CD8-positive, alpha-beta memory T cell (primary cell): ENCODE measurements at regions of chrX and their contacts with region 1.

Region 1: DNA sequence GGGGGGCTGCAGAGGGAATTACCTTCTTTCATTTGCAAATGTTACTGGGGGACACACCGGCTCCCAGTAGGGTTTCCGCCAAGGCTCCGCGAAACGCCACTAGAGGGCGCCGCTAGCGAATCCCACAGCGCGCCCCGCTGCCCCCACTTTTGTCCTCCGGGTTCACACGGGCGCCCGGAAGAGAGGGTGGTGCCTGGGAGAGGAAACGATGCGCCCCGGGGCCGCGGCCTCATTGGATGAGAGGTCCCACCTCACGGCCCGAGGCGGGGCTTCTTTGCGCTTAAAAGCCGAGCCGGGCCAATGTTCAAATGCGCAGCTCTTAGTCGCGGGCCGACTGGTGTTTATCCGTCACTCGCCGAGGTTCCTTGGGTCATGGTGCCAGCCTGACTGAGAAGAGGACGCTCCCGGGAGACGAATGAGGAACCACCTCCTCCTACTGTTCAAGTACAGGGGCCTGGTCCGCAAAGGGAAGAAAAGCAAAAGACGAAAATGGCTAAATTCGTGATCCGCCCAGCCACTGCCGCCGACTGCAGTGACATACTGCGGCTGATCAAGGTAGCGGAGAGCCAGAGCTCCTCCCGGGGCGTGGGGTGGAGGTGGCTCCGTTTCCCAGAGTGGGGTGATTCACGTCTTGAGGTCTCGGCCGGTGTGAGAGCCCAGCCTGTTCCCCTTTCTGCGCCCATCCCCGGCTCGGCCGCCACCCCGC is at the start of gene SAT1:
- DNase-seq: peak; percentile 87 to 96 (median 90)
- H3K4me3 ChIP-seq: peak within 1 kb of the TSS; percentile 78
- H3K4me3 Mint-ChIP-seq: peak within 1 kb of the TSS; percentile 95 to 100 (median 97)
- H3K27ac ChIP-seq: peak within 1 kb of the TSS; percentile 89
- H3K27ac Mint-ChIP-seq: peak within 1 kb of the TSS; percentile 96 to 98 (median 98)
- H3K4me1 ChIP-seq: peaks cover 23% of the 10 kb centered on the region
- H3K4me1 Mint-ChIP-seq: peaks cover 34 to 44% (median 42%) of the 10 kb centered on the region in 3 donors
- H3K27me3 ChIP-seq: no peaks in the 10 kb centered on the region
- H3K27me3 Mint-ChIP-seq: peaks cover 0 to 5% of the 10 kb centered on the region in 2 donors
- total RNA-seq, gene SAT1: 40.0 to 41.3 TPM

Region 2: DNA sequence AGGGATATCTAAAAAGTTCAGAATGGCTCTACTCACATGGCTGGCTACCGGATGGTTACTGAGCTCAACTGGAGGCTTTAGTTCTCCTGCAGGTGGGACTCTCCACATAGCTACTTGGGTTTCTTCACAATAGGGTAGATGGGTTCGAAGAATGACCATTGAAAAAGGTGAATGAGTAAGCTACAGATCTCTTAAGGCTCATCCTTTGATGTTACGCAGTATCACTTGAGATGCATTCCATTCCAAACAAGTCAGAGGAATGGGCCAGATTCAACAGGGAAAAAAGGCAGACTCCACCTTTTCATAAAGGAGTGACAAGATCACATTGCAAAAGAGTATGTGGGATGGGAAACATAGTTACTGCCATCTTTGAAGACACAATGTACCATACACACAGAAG is 730.7 kb before region 1 on chrX:
- CTCF ChIA-PET with region 1: no interaction called
- POLR2A ChIA-PET with region 1: no interaction called
- DNase-seq: no peak
- H3K4me3 ChIP-seq: no peak overlapping the region
- H3K4me3 Mint-ChIP-seq: no peak overlapping the region
- H3K27ac ChIP-seq: no peak overlapping the region
- H3K27ac Mint-ChIP-seq: no peak overlapping the region
- H3K4me1 ChIP-seq: no peaks in the 10 kb centered on the region
- H3K4me1 Mint-ChIP-seq: no peaks in the 10 kb centered on the region
- H3K27me3 ChIP-seq: no peaks in the 10 kb centered on the region
- H3K27me3 Mint-ChIP-seq: peaks cover 0 to 2% of the 10 kb centered on the region in 2 donors

Region 3: GRCh38 chrX:23742697-23743622 is 40.1 kb before region 1 on chrX and contains the start of gene ACOT9:
- CTCF ChIA-PET with region 1: interaction called, 19 read pairs
- POLR2A ChIA-PET with region 1: interaction called, 11 read pairs
- DNase-seq: peak; percentile 45 to 79 (median 75)
- H3K4me3 ChIP-seq: peak within 1 kb of the TSS; percentile 62
- H3K4me3 Mint-ChIP-seq: peak within 1 kb of the TSS; percentile 85 to 95 (median 90)
- H3K27ac ChIP-seq: peak within 1 kb of the TSS; percentile 71
- H3K27ac Mint-ChIP-seq: peak within 1 kb of the TSS; percentile 86 to 95 (median 93)
- H3K4me1 ChIP-seq: peaks cover 17% of the 10 kb centered on the region
- H3K4me1 Mint-ChIP-seq: peaks cover 27 to 60% (median 45%) of the 10 kb centered on the region in 3 donors
- H3K27me3 ChIP-seq: no peaks in the 10 kb centered on the region
- H3K27me3 Mint-ChIP-seq: no peaks in the 10 kb centered on the region
- total RNA-seq, gene ACOT9: 31.1 to 33.9 TPM

Region 4: DNA sequence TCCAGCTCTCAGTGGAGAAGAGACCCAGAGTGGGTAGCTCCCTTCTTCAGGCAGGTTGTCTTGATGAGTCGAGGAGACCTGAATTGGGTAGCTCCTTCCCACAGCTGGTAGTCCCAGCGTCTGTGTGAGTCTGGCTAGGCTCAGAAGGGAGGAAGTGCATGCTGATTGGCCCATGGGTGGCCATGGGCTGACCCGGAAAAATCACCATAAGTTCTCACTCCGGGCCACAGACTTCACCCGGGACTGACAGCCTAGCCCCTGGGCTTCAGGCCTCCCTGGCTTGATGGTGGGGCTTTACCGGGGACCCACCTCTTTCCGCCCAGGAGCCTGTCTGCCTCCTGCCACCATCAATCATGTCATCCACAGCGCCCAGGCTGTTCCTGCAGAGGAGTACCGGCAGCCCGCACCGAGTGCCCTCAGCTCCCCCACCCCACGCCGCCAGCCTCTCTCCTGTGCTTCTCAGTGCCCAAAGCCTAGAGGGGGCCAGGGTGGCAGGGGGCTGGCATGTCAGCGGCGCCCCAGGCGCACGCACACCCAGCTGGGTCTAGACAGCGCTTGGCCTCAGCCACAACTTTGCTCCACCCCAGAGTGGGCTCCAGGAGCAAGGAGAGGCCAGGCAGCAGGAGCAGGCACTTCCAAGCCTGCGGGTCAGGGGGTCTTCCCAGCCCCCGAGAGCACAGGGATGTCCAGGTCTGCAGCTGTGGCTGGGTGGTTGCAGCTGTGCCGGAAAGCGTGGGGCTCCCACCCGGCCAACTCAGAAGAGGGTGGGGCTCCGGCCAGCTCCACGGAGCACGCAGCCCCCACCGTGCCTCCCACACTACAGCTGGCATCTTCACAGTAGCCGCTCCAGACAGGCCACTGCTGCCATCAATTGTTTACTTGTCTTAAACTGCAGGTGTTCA is 16.1 kb before region 1 on chrX:
- CTCF ChIA-PET with region 1: interaction called, 12 read pairs
- POLR2A ChIA-PET with region 1: interaction called, 3 read pairs
- DNase-seq: no peak
- H3K4me3 ChIP-seq: no peak overlapping the region
- H3K4me3 Mint-ChIP-seq: peak overlapping the region in 6 of 7 donors; percentile 48 to 83 (median 70)
- H3K27ac ChIP-seq: no peak overlapping the region
- H3K27ac Mint-ChIP-seq: peak overlapping the region in 3 of 8 donors; percentile 21 to 83 (median 66)
- H3K4me1 ChIP-seq: no peaks in the 10 kb centered on the region
- H3K4me1 Mint-ChIP-seq: peaks cover 0 to 4% (median 0%) of the 10 kb centered on the region in 3 donors
- H3K27me3 ChIP-seq: no peaks in the 10 kb centered on the region
- H3K27me3 Mint-ChIP-seq: peaks cover 0 to 4% of the 10 kb centered on the region in 2 donors

Region 5: GRCh38 chrX:23797371-23798128 is 14.5 kb after region 1 on chrX:
- CTCF ChIA-PET with region 1: no interaction called
- POLR2A ChIA-PET with region 1: no interaction called
- DNase-seq: no peak
- H3K4me3 ChIP-seq: no peak overlapping the region
- H3K4me3 Mint-ChIP-seq: no peak overlapping the region
- H3K27ac ChIP-seq: no peak overlapping the region
- H3K27ac Mint-ChIP-seq: no peak overlapping the region
- H3K4me1 ChIP-seq: no peaks in the 10 kb centered on the region
- H3K4me1 Mint-ChIP-seq: no peaks in the 10 kb centered on the region
- H3K27me3 ChIP-seq: no peaks in the 10 kb centered on the region
- H3K27me3 Mint-ChIP-seq: peaks cover 0 to 3% of the 10 kb centered on the region in 2 donors

Region 6: DNA sequence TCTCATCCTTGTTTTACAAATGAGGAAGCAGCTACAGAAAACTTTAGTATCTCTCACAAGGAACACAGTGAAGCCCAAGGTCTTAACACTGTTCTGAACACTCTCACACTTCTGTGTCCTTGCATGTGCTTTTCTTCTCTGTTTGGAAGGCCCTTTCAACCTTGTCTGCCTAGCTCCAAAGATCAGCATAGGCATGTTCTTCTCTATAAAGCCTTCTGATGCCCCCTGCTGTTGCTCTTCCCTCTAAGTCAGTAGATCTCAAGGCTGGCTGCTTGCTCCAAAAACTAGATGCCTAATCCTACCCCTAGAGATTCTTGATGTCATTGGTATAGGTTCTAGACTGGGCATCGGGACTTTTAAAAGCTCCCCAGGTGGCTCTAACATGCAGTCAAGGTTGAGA is 118.8 kb after region 1 on chrX:
- CTCF ChIA-PET with region 1: interaction called, 21 read pairs
- POLR2A ChIA-PET with region 1: interaction called, 10 read pairs
- DNase-seq: peak in 4 of 5 donors; percentile 1 to 54 (median 29)
- H3K4me3 ChIP-seq: no peak overlapping the region
- H3K4me3 Mint-ChIP-seq: no peak overlapping the region
- H3K27ac ChIP-seq: no peak overlapping the region
- H3K27ac Mint-ChIP-seq: no peak overlapping the region
- H3K4me1 ChIP-seq: no peaks in the 10 kb centered on the region
- H3K4me1 Mint-ChIP-seq: peaks cover 0 to 4% (median 0%) of the 10 kb centered on the region in 3 donors
- H3K27me3 ChIP-seq: no peaks in the 10 kb centered on the region
- H3K27me3 Mint-ChIP-seq: peaks cover 0 to 3% of the 10 kb centered on the region in 2 donors

Region 7: DNA sequence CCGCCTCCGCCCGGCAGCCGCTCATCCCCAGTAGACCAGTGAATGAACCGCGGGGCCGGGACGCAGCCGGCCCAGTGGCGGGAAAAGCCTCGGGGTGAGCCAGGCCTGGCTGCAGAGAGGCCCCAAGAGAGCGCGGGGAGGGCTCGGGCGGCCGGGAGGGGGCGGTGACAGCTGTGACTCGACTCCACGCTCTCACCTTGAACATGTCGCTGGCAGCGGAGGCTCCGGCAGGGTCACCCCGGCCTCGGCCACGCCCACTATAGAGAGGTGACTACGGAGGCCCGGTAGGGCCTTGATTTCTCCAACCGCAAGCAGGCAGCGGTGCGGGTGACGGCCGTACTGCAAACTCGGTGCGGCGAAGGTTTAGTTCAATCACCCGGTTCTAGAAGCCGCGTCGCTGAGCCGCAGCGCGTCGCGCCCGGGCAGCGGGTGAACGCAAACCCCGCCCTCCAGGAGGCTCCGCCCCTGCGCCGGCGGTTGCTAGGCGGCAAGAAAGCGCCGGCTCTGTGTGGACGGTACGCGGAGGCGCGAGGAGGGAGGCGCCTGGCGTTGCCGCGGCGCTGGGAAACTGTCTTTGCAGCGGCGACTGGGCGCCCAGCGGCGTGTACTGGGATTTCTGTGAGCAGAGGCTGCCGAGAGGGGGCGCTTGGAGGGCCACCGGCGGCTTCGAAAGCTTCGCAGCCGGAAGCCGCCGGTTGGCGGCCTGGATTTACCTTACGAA is 124.6 kb after region 1 on chrX and contains the starts of genes APOO and CXorf58:
- CTCF ChIA-PET with region 1: interaction called, 21 read pairs
- POLR2A ChIA-PET with region 1: interaction called, 10 read pairs
- DNase-seq: peak; percentile 83 to 94 (median 91)
- H3K4me3 ChIP-seq: peak within 1 kb of the TSS; percentile 50
- H3K4me3 Mint-ChIP-seq: peak within 1 kb of the TSS; percentile 80 to 91 (median 83)
- H3K27ac ChIP-seq: peak within 1 kb of the TSS; percentile 87
- H3K27ac Mint-ChIP-seq: peak within 1 kb of the TSS; percentile 72 to 97 (median 92)
- H3K4me1 ChIP-seq: peaks cover 10% of the 10 kb centered on the region
- H3K4me1 Mint-ChIP-seq: peaks cover 8 to 15% (median 10%) of the 10 kb centered on the region in 3 donors
- H3K27me3 ChIP-seq: no peaks in the 10 kb centered on the region
- H3K27me3 Mint-ChIP-seq: peaks cover 0 to 3% of the 10 kb centered on the region in 2 donors
- total RNA-seq, gene APOO: 38.3 to 42.6 TPM
- total RNA-seq, gene CXorf58: 0.11 TPM in 1 of 2 experiments, not detected in the other